PC-3 (cell line): ENCODE measurements at regions of chr1 and their contacts with region 1.

Region 1: GRCh38 chr1:155744711-155745283 is 55.9 kb downstream of the DAP3 start:
- DNase-seq: peak; percentile 21
- ATAC-seq: no peak; the same call in 1 of the 2 replicates
- H3K4me3 ChIP-seq: peak overlapping the region; percentile 70
- H3K27ac ChIP-seq: peak overlapping the region; percentile 37
- H3K4me1 ChIP-seq: 0 out of 2 replicates have a peak, but pooled peaks cover 4% of the 10 kb centered on the region
- H3K27me3 ChIP-seq: no peaks in the 10 kb centered on the region
- CTCF ChIP-seq: no peak

Region 2: DNA sequence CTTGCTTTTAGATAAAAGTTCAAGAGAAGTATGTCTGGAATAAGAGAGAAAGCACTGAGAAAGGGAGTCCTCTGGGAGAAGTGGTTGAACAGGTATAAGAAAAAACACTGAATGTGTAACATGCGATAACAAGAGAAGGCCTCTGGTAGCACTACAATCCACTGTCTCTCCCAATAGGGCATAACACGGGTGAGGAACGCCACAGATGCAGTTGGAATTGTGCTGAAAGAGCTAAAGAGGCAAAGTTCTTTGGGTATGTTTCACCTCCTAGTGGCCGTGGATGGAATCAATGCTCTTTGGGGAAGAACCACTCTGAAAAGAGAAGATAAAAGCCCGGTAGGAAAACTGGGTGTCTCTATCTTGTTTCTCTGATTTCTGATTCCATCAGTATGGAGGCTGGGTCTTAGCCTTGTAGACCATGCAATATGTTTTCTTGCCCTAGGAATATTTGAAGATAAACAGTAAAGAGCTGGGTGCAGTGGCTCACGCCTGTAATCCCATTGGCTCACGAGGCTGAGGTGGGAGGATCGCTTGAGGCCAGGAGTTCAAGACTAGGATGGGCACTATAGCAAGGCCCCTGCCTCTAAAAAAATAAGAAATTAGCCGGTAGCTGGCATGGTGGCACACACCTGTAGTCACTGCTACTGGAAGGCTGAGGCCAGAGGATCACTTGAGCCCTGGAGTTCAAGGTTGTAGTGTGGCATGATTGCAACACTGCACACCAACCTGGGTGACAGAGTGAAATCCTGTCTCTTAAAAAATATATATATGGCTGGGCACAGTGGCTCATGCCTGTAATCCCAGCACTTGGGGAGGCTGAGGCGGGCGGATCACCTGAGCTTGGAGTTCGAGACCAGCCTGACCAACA is 15.5 kb before region 1 on chr1:
- CTCF ChIA-PET with region 1: no interaction called
- POLR2A ChIA-PET with region 1: no interaction called
- intact Hi-C with region 1: no loop called
- DNase-seq: peak; percentile 85
- ATAC-seq: peak; percentile 98
- H3K4me3 ChIP-seq: no peak overlapping the region
- H3K27ac ChIP-seq: no peak overlapping the region
- H3K4me1 ChIP-seq: no peaks in the 10 kb centered on the region
- H3K27me3 ChIP-seq: no peaks in the 10 kb centered on the region
- CTCF ChIP-seq: peak; percentile 90

Region 3: GRCh38 chr1:155920717-155921116 is 175.9 kb after region 1 on chr1:
- CTCF ChIA-PET with region 1: no interaction called
- POLR2A ChIA-PET with region 1: interaction called, 13 read pairs
- intact Hi-C with region 1: no loop called
- DNase-seq: no peak
- ATAC-seq: no peak
- H3K4me3 ChIP-seq: no peak overlapping the region
- H3K27ac ChIP-seq: no peak overlapping the region
- H3K4me1 ChIP-seq: peaks cover 5% of the 10 kb centered on the region; the same call in 1 of the 2 replicates
- H3K27me3 ChIP-seq: no peaks in the 10 kb centered on the region
- CTCF ChIP-seq: no peak